ENCODE measurements at regions of chr7 and their contacts with region 1.

Region 1: DNA sequence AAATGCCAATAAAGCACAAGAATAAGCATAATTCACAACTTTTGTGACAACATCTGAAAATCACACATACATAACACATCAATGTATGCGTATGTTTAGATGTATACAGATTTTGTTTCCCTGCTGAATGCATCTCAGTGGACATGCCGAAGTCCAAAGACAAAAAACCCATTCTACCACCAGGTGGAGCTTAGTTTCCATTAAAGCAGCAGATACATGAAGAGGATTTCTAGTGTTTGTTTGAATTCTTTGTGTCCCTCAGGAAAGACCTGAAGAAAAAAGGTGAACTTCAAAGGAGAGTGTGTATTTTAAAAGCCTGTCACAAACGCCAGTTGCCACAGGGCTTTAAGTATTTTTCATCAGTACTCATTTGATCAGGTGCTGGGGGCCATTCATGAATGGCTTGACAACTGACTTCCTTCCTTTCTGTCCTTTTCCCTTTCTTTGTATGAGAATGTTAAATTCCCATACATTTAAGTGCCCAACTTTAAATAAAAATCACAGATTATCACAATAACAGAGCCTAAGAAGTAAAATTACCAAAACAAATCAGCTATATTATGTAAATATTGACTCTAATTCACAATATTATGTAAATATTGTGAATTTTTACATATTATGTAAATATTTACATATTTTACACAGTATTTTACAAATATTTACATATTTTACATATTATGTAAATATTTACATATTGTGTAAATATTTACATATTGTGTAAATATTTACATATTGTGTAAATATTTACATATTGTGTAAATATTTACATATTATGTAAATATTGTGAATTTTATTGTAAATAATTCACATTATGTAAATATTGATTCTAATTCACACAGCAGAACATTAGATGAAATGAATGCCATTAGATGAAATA is 343.0 kb downstream of the CRPPA start:
- DNase-seq: peak in 3 of 5 donors; percentile 46 to 91 (median 86)
- H3K4me3 ChIP-seq: no peak overlapping the region
- H3K27ac ChIP-seq: no peak overlapping the region
- H3K4me1 ChIP-seq: no peaks in the 10 kb centered on the region
- H3K27me3 ChIP-seq: no peaks in the 10 kb centered on the region
- CTCF ChIP-seq: peak; percentile 54

Region 2: DNA sequence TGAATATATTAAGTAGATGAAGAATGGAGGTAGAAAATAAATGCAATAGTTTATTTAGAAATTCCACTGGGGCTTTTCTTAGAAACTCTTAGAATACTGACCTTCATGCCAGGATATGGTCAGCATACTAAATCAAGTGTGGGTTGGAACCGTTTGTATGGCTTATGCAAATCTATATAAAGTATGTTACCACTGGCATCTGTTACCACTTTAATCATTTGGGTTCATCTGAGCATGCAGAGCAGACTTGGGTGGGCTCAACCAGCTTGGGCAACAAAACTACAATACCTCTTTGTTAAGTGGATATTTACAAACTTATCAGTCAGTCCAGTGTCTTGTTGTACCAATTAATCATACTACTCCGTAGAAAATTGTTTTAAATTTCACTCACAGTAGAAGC is 217.2 kb after region 1 on chr7:
- intact Hi-C with region 1: no loop called
- DNase-seq: peak in 2 of 5 donors; percentile 12 to 16
- H3K4me3 ChIP-seq: no peak overlapping the region
- H3K27ac ChIP-seq: no peak overlapping the region
- H3K4me1 ChIP-seq: no peaks in the 10 kb centered on the region
- H3K27me3 ChIP-seq: no peaks in the 10 kb centered on the region
- CTCF ChIP-seq: no peak

Region 3: GRCh38 chr7:16564909-16565426 is 486.7 kb after region 1 on chr7:
- intact Hi-C with region 1: loop called (anchors 5 kb)
- DNase-seq: peak in 3 of 5 donors; percentile 24 to 80 (median 78)
- H3K4me3 ChIP-seq: peak overlapping the region in 1 of 3 donors; percentile 7
- H3K27ac ChIP-seq: no peak overlapping the region
- H3K4me1 ChIP-seq: no peaks in the 10 kb centered on the region
- H3K27me3 ChIP-seq: no peaks in the 10 kb centered on the region
- CTCF ChIP-seq: peak; percentile 67

Region 4: DNA sequence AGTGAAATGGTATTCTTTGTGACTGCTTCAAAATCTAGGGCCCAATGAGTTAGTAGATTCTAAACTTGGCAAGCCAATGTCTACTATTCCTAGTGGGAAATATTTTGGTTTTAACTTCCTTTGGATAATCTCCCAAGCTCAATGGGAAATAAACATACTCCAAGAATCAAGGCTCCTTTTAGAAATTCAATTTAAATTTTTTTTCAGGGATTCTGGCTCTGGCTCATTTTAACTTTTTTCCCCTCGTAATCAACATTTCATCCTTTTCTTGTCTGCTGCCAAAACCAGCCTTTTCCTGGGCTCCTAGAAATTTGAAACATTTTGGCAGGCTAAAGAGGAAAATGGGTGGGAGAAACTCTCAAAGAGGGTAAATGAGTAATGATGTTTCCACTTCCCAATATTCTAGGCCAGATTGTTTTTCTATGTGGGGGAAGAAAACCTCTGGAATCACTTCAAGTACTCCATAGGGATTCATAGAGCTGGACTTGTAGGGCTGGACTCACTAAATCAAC is 889.0 kb after region 1 on chr7:
- intact Hi-C with region 1: no loop called
- DNase-seq: peak in 1 of 5 donors; percentile 30
- H3K4me3 ChIP-seq: no peak overlapping the region
- H3K27ac ChIP-seq: no peak overlapping the region
- H3K4me1 ChIP-seq: no peaks in the 10 kb centered on the region
- H3K27me3 ChIP-seq: no peaks in the 10 kb centered on the region
- CTCF ChIP-seq: no peak